Sigmoid colon (tissue), 7 donors: ENCODE measurements at regions of chr5 and their contacts with region 1.

Region 1: DNA sequence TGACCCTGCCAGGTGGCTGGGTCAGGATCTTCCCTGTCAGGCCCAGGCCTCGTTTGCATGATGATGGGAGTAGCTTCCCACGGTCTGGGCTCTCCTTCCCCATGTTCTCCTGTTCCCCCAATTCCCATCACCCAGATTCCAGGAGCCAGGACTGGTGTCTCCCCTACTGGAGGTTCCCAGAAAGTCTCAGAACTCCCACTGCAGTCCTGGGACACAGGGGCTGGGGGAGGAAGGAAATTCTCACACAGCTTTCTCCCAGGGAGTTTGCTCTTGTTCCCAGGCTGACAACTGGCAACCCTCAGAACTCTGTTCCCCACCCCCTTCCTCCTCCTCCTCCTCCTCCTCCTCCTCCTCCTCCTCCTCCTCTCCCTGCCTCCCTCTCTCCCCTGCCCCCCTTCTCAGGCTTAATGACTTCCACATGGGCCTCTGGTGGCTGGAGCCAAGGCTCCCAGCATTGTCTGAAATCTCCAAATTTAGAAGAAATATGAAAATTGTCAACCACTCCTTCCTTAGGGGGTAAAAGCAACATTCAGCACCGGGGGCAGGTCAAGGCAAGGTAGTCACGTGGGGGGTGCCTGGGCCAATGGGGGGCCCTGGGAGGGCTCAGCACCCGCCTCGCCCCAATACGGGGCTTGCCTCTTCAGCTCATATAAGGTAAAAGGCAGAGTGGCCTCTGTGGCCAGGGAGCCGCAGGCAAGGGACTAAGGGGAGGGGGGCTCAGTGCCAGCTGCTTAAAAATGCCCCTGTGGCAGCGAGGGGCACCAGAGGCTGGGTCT is 27.3 kb upstream of the IL17B start:
- DNase-seq: peak; percentile 99
- H3K4me3 ChIP-seq: peak overlapping the region; percentile 75 to 95 (median 84)
- H3K27ac ChIP-seq: peak overlapping the region; percentile 96 to 98 (median 98)
- H3K4me1 ChIP-seq: peaks cover 0 to 36% (median 30%) of the 10 kb centered on the region in 4 donors
- H3K27me3 ChIP-seq: no peaks in the 10 kb centered on the region
- CTCF ChIP-seq: peak in 1 of 4 experiments; percentile 28
- EP300 ChIP-seq: peak in 3 of 4 donors; percentile 61 to 96 (median 62)
- POLR2A ChIP-seq: peak; percentile 7 to 98

Region 2: GRCh38 chr5:149381987-149382340 is 24.4 kb before region 1 on chr5:
- intact Hi-C with region 1: loop called (anchors 1 kb)
- DNase-seq: peak; percentile 94
- H3K4me3 ChIP-seq: peak overlapping the region; percentile 21 to 55 (median 44)
- H3K27ac ChIP-seq: peak overlapping the region; percentile 93 to 99 (median 98)
- H3K4me1 ChIP-seq: peaks cover 0 to 90% (median 84%) of the 10 kb centered on the region in 4 donors
- H3K27me3 ChIP-seq: no peaks in the 10 kb centered on the region
- CTCF ChIP-seq: peak in 3 of 4 experiments; percentile 92 to 96 (median 95)
- EP300 ChIP-seq: peak in 2 of 4 donors; percentile 31 to 47
- POLR2A ChIP-seq: no peak

Region 3: GRCh38 chr5:149389552-149390495 is 16.6 kb before region 1 on chr5:
- intact Hi-C with region 1: loop called (anchors 1 kb)
- DNase-seq: peak; percentile 91
- H3K4me3 ChIP-seq: peak overlapping the region in 3 of 4 donors; percentile 4 to 24 (median 14)
- H3K27ac ChIP-seq: peak overlapping the region; percentile 93 to 99 (median 98)
- H3K4me1 ChIP-seq: peaks cover 0 to 83% (median 73%) of the 10 kb centered on the region in 4 donors
- H3K27me3 ChIP-seq: no peaks in the 10 kb centered on the region
- CTCF ChIP-seq: no peak
- EP300 ChIP-seq: peak; percentile 99 to 100 (median 100)
- POLR2A ChIP-seq: no peak

Region 4: DNA sequence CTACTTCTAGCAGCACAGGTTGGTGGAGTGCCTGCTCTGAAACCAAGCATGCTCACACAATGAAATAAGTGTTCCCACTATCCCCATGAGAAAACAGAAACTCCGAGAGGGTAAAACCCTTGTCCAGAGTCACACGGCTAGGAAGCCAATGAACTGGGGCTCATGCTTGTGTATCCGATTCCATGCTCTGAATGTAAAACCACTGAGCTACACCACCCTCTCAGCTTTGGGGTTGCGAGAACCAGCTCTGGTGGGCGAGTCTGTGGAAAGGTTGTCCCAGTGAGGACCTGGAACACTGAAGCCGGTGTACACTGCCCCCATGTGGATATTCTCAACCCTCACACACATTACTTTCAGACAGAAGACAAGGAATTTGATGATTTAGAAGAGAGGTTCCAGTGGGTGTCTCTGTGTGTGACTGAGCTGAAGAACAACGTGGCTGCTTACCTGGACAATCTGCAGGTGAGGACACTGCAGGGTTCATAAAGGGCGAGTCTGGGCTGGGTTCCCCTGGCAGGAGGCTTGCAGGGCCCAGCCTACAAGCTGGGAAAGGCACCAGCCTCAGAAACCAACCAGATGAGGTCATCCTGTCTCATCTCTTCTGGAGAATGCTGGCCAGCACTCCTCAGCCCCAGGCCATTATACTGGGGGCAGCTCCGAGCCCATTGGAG is 212.3 kb after region 1 on chr5:
- intact Hi-C with region 1: no loop called
- DNase-seq: no peak
- H3K4me3 ChIP-seq: no peak overlapping the region
- H3K27ac ChIP-seq: peak overlapping the region in 1 of 4 donors; percentile 83
- H3K4me1 ChIP-seq: peaks cover 0 to 45% (median 32%) of the 10 kb centered on the region in 4 donors
- H3K27me3 ChIP-seq: no peaks in the 10 kb centered on the region
- CTCF ChIP-seq: peak; percentile 14 to 61 (median 52)
- EP300 ChIP-seq: no peak
- POLR2A ChIP-seq: no peak